Heart left ventricle (tissue), 16 donors: ENCODE measurements at regions of chr9 and their contacts with region 1.

Region 1: DNA sequence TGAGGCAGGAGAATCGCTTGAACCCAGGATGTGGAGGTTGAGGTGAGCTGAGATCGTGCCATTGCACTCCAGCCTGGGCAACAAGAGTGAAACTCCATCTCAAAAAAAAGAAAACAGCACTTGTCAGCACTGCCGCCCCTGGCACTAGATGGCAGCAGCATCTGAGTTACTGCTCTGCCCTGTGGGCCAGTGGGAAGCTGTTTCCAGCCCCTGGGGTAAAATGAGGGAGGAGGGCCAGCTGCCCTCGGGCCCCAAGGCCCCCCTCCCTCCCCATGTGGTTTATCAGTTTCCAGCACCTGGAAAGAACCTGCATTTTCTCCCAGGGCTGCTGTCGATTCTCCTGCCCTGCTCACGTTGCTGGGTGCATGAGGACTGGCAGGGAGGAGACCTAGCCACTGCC is 13.2 kb upstream of the CEL start:
- DNase-seq: no peak
- ATAC-seq: peak in 3 of 4 donors; percentile 25 to 54 (median 48)
- H3K4me3 ChIP-seq: no peak overlapping the region
- H3K27ac ChIP-seq: no peak overlapping the region
- H3K4me1 ChIP-seq: peaks cover 0 to 3% (median 0%) of the 10 kb centered on the region in 12 donors
- H3K27me3 ChIP-seq: no peaks in the 10 kb centered on the region
- CTCF ChIP-seq: peak in 10 of 12 donors; percentile 22 to 49 (median 36)
- POLR2A ChIP-seq: no peak

Region 2: DNA sequence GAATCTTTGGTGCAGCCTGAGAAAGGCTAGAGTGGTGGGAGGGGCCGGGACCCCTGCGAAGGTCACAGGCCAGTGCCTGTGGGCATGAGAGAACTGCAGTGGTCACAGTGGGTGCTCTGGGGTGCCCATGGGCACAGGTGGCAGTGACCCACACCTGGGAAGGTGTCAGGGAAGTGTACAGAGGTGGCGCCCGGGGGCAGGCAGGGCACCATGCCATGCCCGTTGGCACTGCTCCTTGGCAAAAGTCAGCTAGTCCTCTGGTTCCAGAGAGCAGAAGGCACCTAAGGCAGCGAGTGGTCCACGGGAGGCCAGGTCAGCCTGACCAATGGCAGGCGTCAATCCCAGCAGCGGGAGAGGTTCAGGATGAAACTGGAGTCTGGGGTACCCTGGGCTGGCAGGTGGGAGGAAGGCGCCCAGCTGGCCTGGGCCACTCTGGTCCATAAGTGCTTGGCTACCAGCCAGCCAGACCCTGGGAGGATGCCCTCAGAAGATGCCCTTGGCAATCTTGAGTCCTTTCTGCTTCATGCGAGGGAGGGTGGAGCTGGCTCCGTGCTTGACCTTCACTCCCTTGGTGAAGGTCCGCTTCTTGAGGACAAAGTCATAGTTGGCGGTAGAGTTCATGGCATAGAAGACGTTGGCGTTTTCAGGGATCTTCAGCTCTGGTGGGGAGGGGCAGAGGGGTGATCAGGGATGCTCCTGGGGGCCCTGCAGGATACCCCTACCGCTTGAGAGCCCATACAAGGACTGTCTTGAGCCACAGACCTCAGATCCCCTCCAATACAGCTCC is 49.7 kb after region 1 on chr9:
- intact Hi-C with region 1: loop called in 3 of 10 experiments (anchors 5 kb)
- DNase-seq: peak in 1 of 5 donors; percentile 20
- ATAC-seq: no peak
- H3K4me3 ChIP-seq: no peak overlapping the region
- H3K27ac ChIP-seq: no peak overlapping the region
- H3K4me1 ChIP-seq: peaks cover 0 to 1% (median 0%) of the 10 kb centered on the region in 12 donors
- H3K27me3 ChIP-seq: no peaks in the 10 kb centered on the region
- CTCF ChIP-seq: no peak
- POLR2A ChIP-seq: no peak

Region 3: DNA sequence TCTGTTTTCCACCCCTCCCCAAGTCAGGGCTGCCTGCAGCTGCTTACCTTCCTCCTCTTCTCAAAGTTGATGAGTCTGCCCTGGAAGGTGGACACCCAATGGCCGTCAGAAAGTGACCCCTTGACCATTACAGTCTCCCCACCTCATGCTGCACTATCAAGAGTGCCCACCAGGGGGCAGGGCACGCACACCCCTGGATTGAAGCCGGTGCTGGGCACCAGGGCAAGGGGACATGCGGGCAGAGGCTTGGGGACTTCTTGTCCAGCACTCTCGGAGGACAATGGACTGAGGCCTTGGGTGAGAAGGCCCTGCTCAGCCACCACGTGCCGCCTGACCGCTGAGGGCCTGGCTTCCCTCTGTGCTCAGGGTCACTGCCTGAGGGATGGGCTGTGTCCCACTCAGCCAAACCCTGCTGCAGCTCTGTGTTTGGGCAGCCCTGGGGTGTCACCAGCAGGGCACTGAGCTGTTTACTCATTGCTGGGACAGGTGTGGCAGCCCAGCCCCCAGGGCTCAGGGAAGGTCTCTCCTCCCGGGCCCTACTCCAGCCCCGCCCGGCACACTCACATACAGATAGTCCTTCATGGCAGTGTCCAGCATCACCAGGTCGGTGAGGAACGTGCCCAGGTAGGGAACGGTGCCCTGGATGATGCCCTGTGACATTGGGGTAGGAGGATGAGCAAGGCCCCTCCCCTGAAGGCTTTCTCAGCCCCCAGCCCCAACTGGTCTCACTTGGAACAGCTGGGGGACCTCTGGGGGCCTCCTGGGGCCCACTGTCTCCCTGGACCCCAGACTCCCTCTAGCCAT is 54.8 kb after region 1 on chr9:
- intact Hi-C with region 1: loop called in 3 of 10 experiments (anchors 5 kb)
- DNase-seq: peak; percentile 62 to 87 (median 66)
- ATAC-seq: peak; percentile 35 to 78 (median 68)
- H3K4me3 ChIP-seq: no peak overlapping the region
- H3K27ac ChIP-seq: peak overlapping the region in 1 of 12 donors; percentile 33
- H3K4me1 ChIP-seq: peaks cover 0 to 3% (median 0%) of the 10 kb centered on the region in 12 donors
- H3K27me3 ChIP-seq: no peaks in the 10 kb centered on the region
- CTCF ChIP-seq: peak; percentile 87 to 100 (median 98)
- POLR2A ChIP-seq: no peak